CD4-positive, alpha-beta memory T cell (primary cell): ENCODE measurements at regions of chr2 and their contacts with region 1.

Region 1: DNA sequence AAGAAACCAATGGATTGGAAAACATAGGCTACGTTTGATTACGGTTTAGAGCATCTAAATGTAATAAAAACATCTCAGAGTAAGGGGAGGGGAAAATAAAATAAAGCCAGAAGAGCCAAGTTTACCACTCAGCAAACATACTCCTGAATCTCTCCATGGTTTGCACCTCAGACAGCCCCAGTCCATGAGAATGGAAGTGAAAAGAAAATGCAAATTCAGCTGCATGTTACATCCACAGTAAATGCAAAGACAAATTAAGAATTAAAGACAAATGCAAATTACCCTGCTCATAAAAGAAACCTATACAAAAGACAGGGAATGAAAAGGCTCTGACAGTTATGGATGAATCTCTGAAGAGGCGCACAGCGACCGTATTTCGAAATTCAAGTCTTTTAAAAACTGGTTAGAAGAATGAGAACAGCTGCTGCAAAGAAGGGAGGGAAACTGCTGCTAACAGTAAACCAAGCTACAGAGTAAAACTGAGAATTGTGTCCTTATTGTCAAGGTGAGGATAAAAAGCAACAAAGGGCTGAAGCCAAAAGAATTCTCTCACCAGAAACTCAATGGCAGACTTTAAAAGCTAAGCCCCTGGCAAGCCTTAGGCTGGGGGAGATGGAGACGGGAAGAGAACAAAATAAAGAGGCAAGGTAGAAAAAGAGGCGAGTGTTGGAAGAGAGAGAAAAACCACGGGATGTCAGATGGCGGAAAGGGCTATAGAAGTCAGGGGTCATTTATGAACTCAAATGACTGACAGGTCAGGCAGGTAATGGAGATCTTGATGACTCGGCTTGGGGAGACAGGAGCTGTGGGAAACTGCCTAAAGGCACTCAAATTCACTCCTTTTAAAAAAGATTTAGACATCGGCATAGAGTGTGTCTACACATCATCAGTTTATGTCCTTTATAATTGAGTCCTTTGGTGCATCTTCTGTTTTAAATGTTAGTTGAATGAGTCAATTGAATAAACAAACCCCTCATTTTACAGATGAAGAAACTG is 197.7 kb upstream of the ACVR2A start:
- DNase-seq: no peak
- H3K4me3 ChIP-seq: no peak overlapping the region
- H3K4me3 Mint-ChIP-seq: no peak overlapping the region
- H3K27ac ChIP-seq: no peak overlapping the region
- H3K27ac Mint-ChIP-seq: peak overlapping the region in 1 of 7 donors; percentile 21
- H3K4me1 ChIP-seq: peaks cover 4% of the 10 kb centered on the region
- H3K4me1 Mint-ChIP-seq: peaks cover 5 to 17% (median 9%) of the 10 kb centered on the region in 4 donors
- H3K27me3 ChIP-seq: no peaks in the 10 kb centered on the region
- H3K27me3 Mint-ChIP-seq: no peaks in the 10 kb centered on the region

Region 2: GRCh38 chr2:147630585-147630984 is 16.5 kb before region 1 on chr2:
- CTCF ChIA-PET with region 1: no interaction called
- POLR2A ChIA-PET with region 1: interaction called, 3 read pairs
- intact Hi-C with region 1: loop called (anchors 2 kb)
- DNase-seq: no peak
- H3K4me3 ChIP-seq: no peak overlapping the region
- H3K4me3 Mint-ChIP-seq: peak overlapping the region in 6 of 8 donors; percentile 5 to 63 (median 56)
- H3K27ac ChIP-seq: no peak overlapping the region
- H3K27ac Mint-ChIP-seq: peak overlapping the region; percentile 27 to 89 (median 73)
- H3K4me1 ChIP-seq: peaks cover 28% of the 10 kb centered on the region
- H3K4me1 Mint-ChIP-seq: peaks cover 0 to 25% (median 13%) of the 10 kb centered on the region in 4 donors
- H3K27me3 ChIP-seq: no peaks in the 10 kb centered on the region
- H3K27me3 Mint-ChIP-seq: no peaks in the 10 kb centered on the region

Region 3: GRCh38 chr2:147980940-147981528 is 333.9 kb after region 1 on chr2:
- CTCF ChIA-PET with region 1: no interaction called
- POLR2A ChIA-PET with region 1: no interaction called
- intact Hi-C with region 1: no loop called
- DNase-seq: no peak
- H3K4me3 ChIP-seq: no peak overlapping the region
- H3K4me3 Mint-ChIP-seq: no peak overlapping the region
- H3K27ac ChIP-seq: no peak overlapping the region
- H3K27ac Mint-ChIP-seq: peak overlapping the region in 2 of 7 donors; percentile 17 to 19
- H3K4me1 ChIP-seq: peaks cover 18% of the 10 kb centered on the region
- H3K4me1 Mint-ChIP-seq: peaks cover 31 to 55% (median 44%) of the 10 kb centered on the region in 4 donors
- H3K27me3 ChIP-seq: no peaks in the 10 kb centered on the region
- H3K27me3 Mint-ChIP-seq: no peaks in the 10 kb centered on the region